Esophagus muscularis mucosa (tissue), 4 donors: ENCODE measurements at regions of chr22 and their contacts with region 1.

Region 1: GRCh38 chr22:41832553-41833368 is at the start of gene SREBF2:
- DNase-seq: peak; percentile 100
- H3K4me3 ChIP-seq: peak within 1 kb of the TSS; percentile 87 to 97 (median 90)
- H3K27ac ChIP-seq: peak within 1 kb of the TSS; percentile 92 to 97 (median 94)
- H3K4me1 ChIP-seq: peaks cover 12 to 47% (median 31%) of the 10 kb centered on the region in 4 donors
- H3K27me3 ChIP-seq: no peaks in the 10 kb centered on the region
- CTCF ChIP-seq: peak in 1 of 3 experiments; percentile 8
- EP300 ChIP-seq: no peak
- POLR2A ChIP-seq: peak; percentile 67
- total RNA-seq, gene SREBF2: 56.4 to 97.7 (median 57.2) TPM

Region 2: GRCh38 chr22:41697126-41697775 is 135.5 kb before region 1 on chr22:
- intact Hi-C with region 1: loop called (anchors 10 kb)
- DNase-seq: peak; percentile 98
- H3K4me3 ChIP-seq: peak overlapping the region; percentile 30 to 51 (median 38)
- H3K27ac ChIP-seq: peak overlapping the region; percentile 26 to 38 (median 30)
- H3K4me1 ChIP-seq: peaks cover 19 to 25% (median 20%) of the 10 kb centered on the region in 4 donors
- H3K27me3 ChIP-seq: no peaks in the 10 kb centered on the region
- CTCF ChIP-seq: peak; percentile 93 to 97 (median 96)
- EP300 ChIP-seq: no peak
- POLR2A ChIP-seq: no peak

Region 3: GRCh38 chr22:41873391-41873790 is 40.6 kb after region 1 on chr22:
- intact Hi-C with region 1: no loop called
- DNase-seq: no peak
- H3K4me3 ChIP-seq: no peak overlapping the region
- H3K27ac ChIP-seq: no peak overlapping the region
- H3K4me1 ChIP-seq: peaks cover 0 to 5% (median 0%) of the 10 kb centered on the region in 4 donors
- H3K27me3 ChIP-seq: no peaks in the 10 kb centered on the region
- CTCF ChIP-seq: no peak
- EP300 ChIP-seq: no peak
- POLR2A ChIP-seq: no peak